ENCODE measurements at regions of chr15 and their contacts with region 1.

Region 1: DNA sequence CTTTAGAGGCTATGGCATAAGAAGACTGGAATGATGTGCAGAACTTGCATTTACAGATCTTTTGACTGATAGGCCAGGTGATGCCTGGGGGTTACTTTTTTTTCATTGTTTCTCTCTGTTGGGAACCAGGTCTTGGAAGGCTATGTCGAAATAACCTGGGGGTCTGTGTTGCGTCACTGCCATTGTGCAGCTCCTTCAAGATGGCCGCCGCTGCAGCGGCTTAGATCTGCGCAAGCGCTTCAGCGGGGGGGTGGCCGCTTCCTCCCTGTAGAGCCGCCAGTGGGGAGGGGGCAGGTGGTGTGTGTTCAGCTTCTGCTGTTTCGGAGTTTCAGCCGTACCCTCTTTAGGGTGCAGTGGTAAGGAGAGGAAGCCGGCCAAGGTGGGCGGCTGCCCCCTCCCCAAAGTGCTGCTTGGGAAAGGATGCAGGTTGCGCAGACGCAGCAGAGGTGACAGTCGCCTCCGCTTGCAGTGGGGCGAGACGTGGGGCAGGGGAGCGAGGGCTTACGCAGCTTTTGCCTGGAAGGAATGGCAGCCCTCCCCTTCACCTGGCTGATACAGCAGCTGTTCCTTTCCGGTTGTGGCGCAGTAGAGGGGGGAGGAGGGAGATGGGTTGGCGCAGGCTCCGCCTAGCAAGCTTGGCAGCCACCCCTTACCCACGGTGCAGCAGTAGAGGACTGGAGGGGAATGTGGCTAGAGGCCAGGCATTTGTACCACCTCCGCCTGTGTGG is 1.5 kb downstream of the SNRPN start:
- DNase-seq: peak; percentile 57 to 85 (median 77)
- ATAC-seq: peak; percentile 86
- H3K4me3 ChIP-seq: peak overlapping the region; percentile 92
- H3K4me3 Mint-ChIP-seq: peak overlapping the region; percentile 92 to 99 (median 95)
- H3K27ac ChIP-seq: peak overlapping the region; percentile 85
- H3K27ac Mint-ChIP-seq: peak overlapping the region; percentile 90 to 98 (median 97)
- H3K4me1 ChIP-seq: peaks cover 0 to 8% of the 10 kb centered on the region in 2 donors
- H3K4me1 Mint-ChIP-seq: peaks cover 0 to 23% (median 13%) of the 10 kb centered on the region in 7 donors
- H3K27me3 ChIP-seq: no peaks in the 10 kb centered on the region
- H3K27me3 Mint-ChIP-seq: peaks cover 0 to 6% (median 0%) of the 10 kb centered on the region in 5 donors

Region 2: GRCh38 chr15:23565395-23566070 is 1390.7 kb before region 1 on chr15 and contains the start of gene MKRN3:
- CTCF ChIA-PET with region 1: no interaction called
- POLR2A ChIA-PET with region 1: no interaction called
- intact Hi-C with region 1: loop called in 1 of 2 experiments (anchors 5 kb)
- DNase-seq: peak in 8 of 9 donors; percentile 14 to 68 (median 47)
- ATAC-seq: no peak
- H3K4me3 ChIP-seq: peak within 1 kb of the TSS; percentile 39
- H3K4me3 Mint-ChIP-seq: peak within 1 kb of the TSS; percentile 42 to 86 (median 72)
- H3K27ac ChIP-seq: peak within 1 kb of the TSS; percentile 70
- H3K27ac Mint-ChIP-seq: peak within 1 kb of the TSS in 8 of 9 donors; percentile 75 to 93 (median 82)
- H3K4me1 ChIP-seq: no peaks in the 10 kb centered on the region
- H3K4me1 Mint-ChIP-seq: peaks cover 0 to 13% (median 0%) of the 10 kb centered on the region in 7 donors
- H3K27me3 ChIP-seq: no peaks in the 10 kb centered on the region
- H3K27me3 Mint-ChIP-seq: peaks cover 0 to 13% (median 6%) of the 10 kb centered on the region in 5 donors
- total RNA-seq, gene MKRN3: 0.37 to 11.5 (median 1.8) TPM

Region 3: DNA sequence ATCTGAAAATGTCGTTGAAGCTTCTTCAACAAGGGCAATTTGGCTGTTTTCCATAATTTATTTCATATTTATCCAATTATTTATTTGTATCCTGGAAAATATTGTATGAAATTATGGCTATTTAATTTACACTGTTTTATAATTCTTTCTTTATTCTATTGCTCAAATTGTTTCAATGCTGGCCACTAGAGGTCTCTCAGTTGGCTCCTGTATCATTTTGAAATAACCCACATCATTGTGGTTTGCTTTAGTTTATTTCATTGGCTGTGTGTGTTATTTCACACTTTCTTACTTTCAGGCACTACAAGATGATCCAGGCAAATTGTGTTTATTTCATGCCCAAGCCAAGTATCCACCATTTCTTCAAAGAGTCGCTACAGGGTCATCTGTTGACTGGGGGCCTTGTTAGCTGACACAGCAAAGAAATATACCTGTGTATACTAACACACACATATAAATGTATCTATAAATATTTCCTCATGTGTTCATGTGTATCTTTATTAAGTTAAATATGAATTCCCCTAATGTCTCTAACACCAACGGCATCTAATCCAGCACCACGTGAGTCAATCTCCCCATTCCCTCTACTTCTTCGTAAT is 194.5 kb before region 1 on chr15:
- CTCF ChIA-PET with region 1: no interaction called
- POLR2A ChIA-PET with region 1: no interaction called
- intact Hi-C with region 1: loop called in 1 of 2 experiments (anchors 10 kb)
- DNase-seq: no peak
- ATAC-seq: no peak
- H3K4me3 ChIP-seq: no peak overlapping the region
- H3K4me3 Mint-ChIP-seq: no peak overlapping the region
- H3K27ac ChIP-seq: no peak overlapping the region
- H3K27ac Mint-ChIP-seq: no peak overlapping the region
- H3K4me1 ChIP-seq: no peaks in the 10 kb centered on the region
- H3K4me1 Mint-ChIP-seq: no peaks in the 10 kb centered on the region
- H3K27me3 ChIP-seq: no peaks in the 10 kb centered on the region
- H3K27me3 Mint-ChIP-seq: no peaks in the 10 kb centered on the region

Region 4: DNA sequence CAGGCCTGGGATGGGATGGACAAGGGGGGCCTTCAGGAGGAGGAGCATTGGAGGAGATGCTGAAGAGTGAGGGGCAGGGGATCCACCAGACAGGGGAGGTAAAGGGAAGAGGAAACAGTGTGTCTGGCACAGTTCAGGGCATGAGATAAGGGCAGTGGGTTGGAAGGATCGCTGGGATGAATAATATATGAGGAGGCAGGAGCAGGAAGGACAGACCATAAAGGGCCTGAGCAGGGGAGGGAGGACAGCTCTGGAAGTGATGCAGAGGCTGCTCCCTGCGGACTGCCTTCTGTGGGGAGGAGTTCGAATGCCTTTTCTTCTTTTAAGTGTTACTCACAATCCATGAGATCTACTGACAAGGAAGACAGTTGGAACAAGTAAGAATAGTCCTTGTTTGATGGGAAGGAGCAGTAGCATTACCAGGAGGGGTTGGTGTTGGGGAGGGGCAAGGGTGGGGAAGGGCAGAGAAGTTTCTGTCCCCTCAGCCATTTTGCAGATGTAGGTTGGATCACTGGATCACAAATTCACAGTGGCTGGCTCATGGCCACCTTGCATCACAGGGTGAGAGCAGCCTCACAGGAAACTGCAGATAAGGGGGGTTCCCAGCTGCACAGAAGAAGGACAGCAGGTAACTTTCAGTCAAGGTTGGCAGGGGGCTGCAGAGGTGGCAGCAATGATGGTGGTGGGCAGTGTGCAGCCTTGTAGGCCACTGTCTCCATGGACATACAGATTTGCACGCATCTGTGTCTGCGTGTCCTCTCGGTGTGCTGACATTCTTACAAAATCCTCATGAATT is 93.4 kb before region 1 on chr15:
- CTCF ChIA-PET with region 1: no interaction called
- POLR2A ChIA-PET with region 1: no interaction called
- intact Hi-C with region 1: no loop called
- DNase-seq: no peak
- ATAC-seq: no peak
- H3K4me3 ChIP-seq: no peak overlapping the region
- H3K4me3 Mint-ChIP-seq: no peak overlapping the region
- H3K27ac ChIP-seq: no peak overlapping the region
- H3K27ac Mint-ChIP-seq: no peak overlapping the region
- H3K4me1 ChIP-seq: no peaks in the 10 kb centered on the region
- H3K4me1 Mint-ChIP-seq: peaks cover 0 to 2% (median 0%) of the 10 kb centered on the region in 7 donors
- H3K27me3 ChIP-seq: no peaks in the 10 kb centered on the region
- H3K27me3 Mint-ChIP-seq: peaks cover 0 to 4% (median 0%) of the 10 kb centered on the region in 5 donors

Region 5: DNA sequence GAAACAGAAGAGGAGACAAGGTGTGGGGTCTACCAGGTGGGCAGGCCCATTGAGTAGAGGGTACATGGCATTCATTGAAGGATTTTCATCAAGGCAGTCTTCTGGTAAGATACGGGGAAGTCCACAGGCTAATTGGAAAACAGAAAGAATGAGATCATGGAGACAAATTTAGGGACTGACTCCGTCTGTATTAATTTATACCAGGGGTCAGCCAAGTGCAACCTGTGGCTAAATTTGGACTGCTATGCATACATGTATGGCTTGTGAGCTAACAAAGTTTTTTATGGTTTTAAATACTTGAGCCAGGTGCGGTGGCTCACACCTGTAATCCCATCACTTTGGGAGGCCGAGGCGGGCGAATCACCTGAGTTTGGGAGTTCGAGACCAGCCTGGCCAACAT is 22.6 kb before region 1 on chr15:
- CTCF ChIA-PET with region 1: no interaction called
- POLR2A ChIA-PET with region 1: no interaction called
- intact Hi-C with region 1: no loop called
- DNase-seq: no peak
- ATAC-seq: no peak
- H3K4me3 ChIP-seq: no peak overlapping the region
- H3K4me3 Mint-ChIP-seq: no peak overlapping the region
- H3K27ac ChIP-seq: no peak overlapping the region
- H3K27ac Mint-ChIP-seq: no peak overlapping the region
- H3K4me1 ChIP-seq: no peaks in the 10 kb centered on the region
- H3K4me1 Mint-ChIP-seq: no peaks in the 10 kb centered on the region
- H3K27me3 ChIP-seq: no peaks in the 10 kb centered on the region
- H3K27me3 Mint-ChIP-seq: no peaks in the 10 kb centered on the region

Region 6: GRCh38 chr15:24985224-24985623 is 28.9 kb after region 1 on chr15:
- CTCF ChIA-PET with region 1: interaction called, 4 read pairs
- POLR2A ChIA-PET with region 1: interaction called, 3 read pairs
- intact Hi-C with region 1: loop called in 1 of 2 experiments (anchors 5 kb)
- DNase-seq: no peak
- ATAC-seq: no peak
- H3K4me3 ChIP-seq: no peak overlapping the region
- H3K4me3 Mint-ChIP-seq: no peak overlapping the region
- H3K27ac ChIP-seq: no peak overlapping the region
- H3K27ac Mint-ChIP-seq: no peak overlapping the region
- H3K4me1 ChIP-seq: no peaks in the 10 kb centered on the region
- H3K4me1 Mint-ChIP-seq: peaks cover 0 to 4% (median 0%) of the 10 kb centered on the region in 7 donors
- H3K27me3 ChIP-seq: no peaks in the 10 kb centered on the region
- H3K27me3 Mint-ChIP-seq: no peaks in the 10 kb centered on the region

Region 7: GRCh38 chr15:25019434-25019833 is 63.2 kb after region 1 on chr15:
- CTCF ChIA-PET with region 1: no interaction called
- POLR2A ChIA-PET with region 1: interaction called, 4 read pairs
- intact Hi-C with region 1: loop called in 1 of 2 experiments (anchors 5 kb)
- DNase-seq: no peak
- ATAC-seq: no peak
- H3K4me3 ChIP-seq: no peak overlapping the region
- H3K4me3 Mint-ChIP-seq: no peak overlapping the region
- H3K27ac ChIP-seq: no peak overlapping the region
- H3K27ac Mint-ChIP-seq: no peak overlapping the region
- H3K4me1 ChIP-seq: no peaks in the 10 kb centered on the region
- H3K4me1 Mint-ChIP-seq: peaks cover 0 to 2% (median 0%) of the 10 kb centered on the region in 7 donors
- H3K27me3 ChIP-seq: no peaks in the 10 kb centered on the region
- H3K27me3 Mint-ChIP-seq: no peaks in the 10 kb centered on the region

Region 8: DNA sequence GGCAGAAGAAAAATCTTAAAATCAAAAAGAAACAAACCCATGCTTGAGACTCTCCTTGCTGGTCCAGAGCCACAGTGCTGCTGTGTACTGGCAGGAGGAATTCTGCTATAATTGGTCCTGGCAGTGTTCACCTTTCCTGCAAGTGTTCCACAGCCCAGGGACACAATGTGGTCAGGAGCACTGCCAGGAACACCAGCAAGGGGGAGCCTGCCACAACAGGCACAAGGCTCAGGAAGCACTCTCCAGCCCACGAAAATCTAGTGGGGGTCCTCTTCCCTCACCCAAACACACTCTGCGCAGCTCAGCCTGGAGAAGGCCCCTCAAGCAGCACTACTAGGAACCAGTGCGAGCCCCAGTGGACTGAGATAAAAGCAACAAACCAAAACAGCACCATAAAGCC is 389.7 kb after region 1 on chr15:
- CTCF ChIA-PET with region 1: no interaction called
- POLR2A ChIA-PET with region 1: no interaction called
- intact Hi-C with region 1: loop called in 1 of 2 experiments (anchors 10 kb)
- DNase-seq: no peak
- ATAC-seq: no peak
- H3K4me3 ChIP-seq: no peak overlapping the region
- H3K4me3 Mint-ChIP-seq: no peak overlapping the region
- H3K27ac ChIP-seq: no peak overlapping the region
- H3K27ac Mint-ChIP-seq: no peak overlapping the region
- H3K4me1 ChIP-seq: no peaks in the 10 kb centered on the region
- H3K4me1 Mint-ChIP-seq: peaks cover 0 to 11% (median 0%) of the 10 kb centered on the region in 7 donors
- H3K27me3 ChIP-seq: no peaks in the 10 kb centered on the region
- H3K27me3 Mint-ChIP-seq: no peaks in the 10 kb centered on the region

Region 9: GRCh38 chr15:25438601-25439368 is 482.5 kb after region 1 on chr15 and contains the start of gene UBE3A:
- CTCF ChIA-PET with region 1: no interaction called
- POLR2A ChIA-PET with region 1: interaction called, 4 read pairs
- intact Hi-C with region 1: loop called (anchors 1 kb)
- DNase-seq: peak; percentile 76 to 94 (median 88)
- ATAC-seq: peak; percentile 96
- H3K4me3 ChIP-seq: peak within 1 kb of the TSS; percentile 80
- H3K4me3 Mint-ChIP-seq: peak within 1 kb of the TSS; percentile 88 to 96 (median 92)
- H3K27ac ChIP-seq: peak within 1 kb of the TSS; percentile 93
- H3K27ac Mint-ChIP-seq: peak within 1 kb of the TSS; percentile 79 to 97 (median 93)
- H3K4me1 ChIP-seq: peaks cover 23 to 28% of the 10 kb centered on the region in 2 donors
- H3K4me1 Mint-ChIP-seq: peaks cover 17 to 42% (median 36%) of the 10 kb centered on the region in 7 donors
- H3K27me3 ChIP-seq: no peaks in the 10 kb centered on the region
- H3K27me3 Mint-ChIP-seq: no peaks in the 10 kb centered on the region
- total RNA-seq, gene UBE3A: 87.0 to 143 (median 127) TPM

Measured in naive thymus-derived CD4-positive, alpha-beta T cell (primary cell).